ENCODE measurements at regions of chr13 and their contacts with region 1.

Region 1: GRCh38 chr13:93201992-93202558 is 24.5 kb upstream of the GPC6 start:
- DNase-seq: peak in 3 of 4 experiments; percentile 16 to 21 (median 20)
- ATAC-seq: no peak
- H3K4me3 ChIP-seq: no peak overlapping the region
- H3K27ac ChIP-seq: no peak overlapping the region
- H3K4me1 ChIP-seq: no peaks in the 10 kb centered on the region
- H3K27me3 ChIP-seq: no peaks in the 10 kb centered on the region; a peak in 1 of 5 replicates
- CTCF ChIP-seq: no peak
- EP300 ChIP-seq: no peak
- POLR2A ChIP-seq: no peak
- RAD21 ChIP-seq: no peak

Region 2: GRCh38 chr13:92303428-92303827 is 898.6 kb before region 1 on chr13:
- CTCF ChIA-PET with region 1: no interaction called
- POLR2A ChIA-PET with region 1: interaction called, 6 read pairs
- in situ Hi-C with region 1: loop called (anchors 5 kb)
- intact Hi-C with region 1: no loop called
- DNase-seq: peak in 3 of 4 experiments; percentile 11 to 18 (median 17)
- ATAC-seq: peak; percentile 24; the same call in 2 of the 3 replicates
- H3K4me3 ChIP-seq: no peak overlapping the region
- H3K27ac ChIP-seq: no peak overlapping the region
- H3K4me1 ChIP-seq: no peaks in the 10 kb centered on the region
- H3K27me3 ChIP-seq: no peaks in the 10 kb centered on the region
- CTCF ChIP-seq: no peak
- EP300 ChIP-seq: no peak
- POLR2A ChIP-seq: no peak
- RAD21 ChIP-seq: no peak

Region 3: DNA sequence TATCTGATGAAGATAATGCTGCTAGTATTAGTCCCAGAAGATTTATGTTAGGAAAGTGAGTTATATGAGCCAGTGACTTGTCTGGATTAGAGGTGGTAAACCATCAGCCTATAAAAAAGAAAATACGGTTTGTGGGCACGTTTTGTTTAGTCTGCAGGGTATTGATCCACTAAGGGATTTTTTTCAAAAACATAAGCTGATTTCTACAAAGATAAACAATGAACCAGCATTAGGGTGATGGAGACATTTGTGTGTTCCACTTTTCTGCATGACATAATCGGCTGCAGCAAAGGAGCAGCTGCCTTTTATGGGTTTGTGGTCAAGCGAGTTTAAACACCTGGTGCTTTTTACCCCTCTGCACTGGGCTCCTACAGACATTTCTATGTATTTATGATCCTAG is 811.9 kb before region 1 on chr13:
- CTCF ChIA-PET with region 1: no interaction called
- POLR2A ChIA-PET with region 1: no interaction called
- in situ Hi-C with region 1: loop called (anchors 10 kb)
- intact Hi-C with region 1: no loop called
- DNase-seq: no peak
- ATAC-seq: no peak
- H3K4me3 ChIP-seq: no peak overlapping the region
- H3K27ac ChIP-seq: no peak overlapping the region
- H3K4me1 ChIP-seq: no peaks in the 10 kb centered on the region
- H3K27me3 ChIP-seq: no peaks in the 10 kb centered on the region
- CTCF ChIP-seq: no peak
- EP300 ChIP-seq: no peak
- POLR2A ChIP-seq: no peak
- RAD21 ChIP-seq: no peak

Region 4: DNA sequence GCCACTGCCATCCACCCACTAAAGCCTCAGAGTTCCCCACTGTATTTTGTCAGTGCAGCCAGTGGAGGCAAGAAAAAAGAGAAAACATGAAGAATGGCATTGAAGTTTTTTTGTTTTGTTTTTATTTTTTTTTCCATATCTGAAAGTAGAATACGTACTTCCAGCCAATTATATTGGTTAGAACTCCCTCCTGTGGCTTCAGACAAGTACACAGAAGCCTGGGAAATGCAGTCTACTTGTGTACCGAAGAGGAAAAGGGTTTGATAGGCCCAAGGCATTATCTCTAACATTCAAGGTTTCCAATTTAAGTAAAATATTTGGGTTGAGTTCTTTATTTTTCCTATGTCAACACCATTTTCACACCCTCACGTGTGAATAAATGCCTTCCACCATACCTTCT is 671.7 kb before region 1 on chr13:
- CTCF ChIA-PET with region 1: no interaction called
- POLR2A ChIA-PET with region 1: no interaction called
- in situ Hi-C with region 1: loop called (anchors 10 kb)
- intact Hi-C with region 1: loop called (anchors 10 kb)
- DNase-seq: no peak
- ATAC-seq: no peak
- H3K4me3 ChIP-seq: no peak overlapping the region
- H3K27ac ChIP-seq: no peak overlapping the region
- H3K4me1 ChIP-seq: no peaks in the 10 kb centered on the region
- H3K27me3 ChIP-seq: no peaks in the 10 kb centered on the region
- CTCF ChIP-seq: peak in 1 of 3 experiments; percentile 16; a peak in 1 of 6 replicates
- EP300 ChIP-seq: no peak
- POLR2A ChIP-seq: no peak
- RAD21 ChIP-seq: no peak

Region 5: DNA sequence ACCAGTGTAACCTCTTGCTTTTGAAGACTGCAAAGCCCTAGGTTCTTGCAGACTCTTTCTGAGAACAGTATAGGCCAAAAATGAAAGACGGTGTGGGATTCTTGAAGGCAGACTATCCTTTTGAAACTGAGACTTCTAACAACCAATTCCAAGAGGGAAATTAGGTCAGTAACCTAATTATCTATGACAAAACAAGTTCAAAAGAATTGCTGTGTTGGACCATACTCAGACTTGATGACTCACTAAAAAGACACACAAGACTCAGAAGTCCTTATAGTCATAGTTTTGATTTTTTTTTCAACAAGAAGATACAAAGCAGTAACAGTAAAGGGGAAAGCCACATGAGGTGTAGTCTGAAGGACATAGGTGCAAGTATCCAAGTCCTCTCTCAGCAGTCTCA is 599.5 kb before region 1 on chr13:
- CTCF ChIA-PET with region 1: no interaction called
- POLR2A ChIA-PET with region 1: no interaction called
- in situ Hi-C with region 1: no loop called
- intact Hi-C with region 1: no loop called
- DNase-seq: no peak
- ATAC-seq: no peak
- H3K4me3 ChIP-seq: no peak overlapping the region
- H3K27ac ChIP-seq: no peak overlapping the region
- H3K4me1 ChIP-seq: no peaks in the 10 kb centered on the region
- H3K27me3 ChIP-seq: no peaks in the 10 kb centered on the region
- CTCF ChIP-seq: no peak
- EP300 ChIP-seq: no peak
- POLR2A ChIP-seq: no peak
- RAD21 ChIP-seq: no peak

Region 6: DNA sequence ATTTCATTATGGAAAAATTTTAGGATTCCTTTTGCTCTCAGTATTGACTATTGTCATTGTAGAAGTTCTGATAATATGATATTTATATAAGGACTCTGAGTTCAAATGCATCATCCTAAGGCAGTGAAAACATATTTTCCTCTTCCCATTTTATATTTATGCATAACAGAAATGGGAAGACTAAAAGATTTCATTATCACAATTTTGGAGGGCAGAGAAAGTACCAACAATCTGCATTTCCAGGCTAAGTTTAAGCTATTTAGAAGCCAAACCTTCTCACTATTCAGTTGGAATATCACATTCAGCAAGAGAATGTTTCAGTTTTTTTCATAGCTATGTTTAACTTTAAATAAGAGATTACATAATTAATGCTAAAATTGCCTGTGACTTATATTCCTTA is 533.9 kb before region 1 on chr13:
- CTCF ChIA-PET with region 1: no interaction called
- POLR2A ChIA-PET with region 1: no interaction called
- in situ Hi-C with region 1: no loop called
- intact Hi-C with region 1: loop called (anchors 10 kb)
- DNase-seq: no peak
- ATAC-seq: no peak
- H3K4me3 ChIP-seq: no peak overlapping the region
- H3K27ac ChIP-seq: no peak overlapping the region
- H3K4me1 ChIP-seq: no peaks in the 10 kb centered on the region
- H3K27me3 ChIP-seq: no peaks in the 10 kb centered on the region
- CTCF ChIP-seq: no peak
- EP300 ChIP-seq: no peak
- POLR2A ChIP-seq: no peak
- RAD21 ChIP-seq: no peak

Region 7: GRCh38 chr13:93216122-93216521 is 14.0 kb after region 1 on chr13:
- CTCF ChIA-PET with region 1: no interaction called
- POLR2A ChIA-PET with region 1: interaction called, 12 read pairs
- in situ Hi-C with region 1: no loop called
- intact Hi-C with region 1: no loop called
- DNase-seq: peak in 3 of 4 experiments; percentile 14 to 18 (median 17)
- ATAC-seq: peak; percentile 16; the same call in 2 of the 3 replicates
- H3K4me3 ChIP-seq: no peak overlapping the region
- H3K27ac ChIP-seq: no peak overlapping the region
- H3K4me1 ChIP-seq: no peaks in the 10 kb centered on the region
- H3K27me3 ChIP-seq: no peaks in the 10 kb centered on the region
- CTCF ChIP-seq: no peak
- EP300 ChIP-seq: no peak
- POLR2A ChIP-seq: no peak
- RAD21 ChIP-seq: no peak

Region 8: DNA sequence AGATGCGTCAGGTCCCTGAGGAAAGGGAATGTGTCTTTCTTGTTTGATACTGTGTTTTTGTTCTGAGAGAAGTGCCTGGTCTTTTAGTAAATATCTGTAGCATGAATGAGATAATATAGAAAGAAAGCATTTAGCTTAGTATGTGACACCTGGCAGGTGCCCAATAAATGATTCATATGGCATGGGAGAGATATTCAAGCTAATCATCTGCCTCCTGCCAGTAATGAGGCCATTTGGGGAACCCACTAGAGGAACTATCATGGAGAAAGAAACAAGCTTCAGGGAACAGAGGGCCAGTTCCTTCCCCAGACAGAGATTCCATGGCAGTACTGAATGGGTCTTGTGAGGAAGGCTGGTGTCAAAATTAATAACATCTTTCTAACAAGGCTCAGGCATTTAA is 673.5 kb after region 1 on chr13:
- CTCF ChIA-PET with region 1: no interaction called
- POLR2A ChIA-PET with region 1: no interaction called
- in situ Hi-C with region 1: no loop called
- intact Hi-C with region 1: no loop called
- DNase-seq: no peak
- ATAC-seq: no peak
- H3K4me3 ChIP-seq: no peak overlapping the region
- H3K27ac ChIP-seq: no peak overlapping the region
- H3K4me1 ChIP-seq: no peaks in the 10 kb centered on the region
- H3K27me3 ChIP-seq: no peaks in the 10 kb centered on the region
- CTCF ChIP-seq: no peak
- EP300 ChIP-seq: no peak
- POLR2A ChIP-seq: no peak
- RAD21 ChIP-seq: no peak

Measured in K562 (cell line).